Calu3 (cell line): ENCODE measurements at regions of chr11 and their contacts with region 1.

Region 1: GRCh38 chr11:6377902-6378639 is 12.2 kb upstream of the SMPD1 start:
- DNase-seq: no peak
- H3K4me3 Mint-ChIP-seq: no peak overlapping the region
- H3K27ac Mint-ChIP-seq: no peak overlapping the region
- H3K4me1 Mint-ChIP-seq: no peaks in the 10 kb centered on the region
- H3K27me3 Mint-ChIP-seq: peaks cover 28% of the 10 kb centered on the region
- CTCF ChIP-seq: no peak

Region 2: DNA sequence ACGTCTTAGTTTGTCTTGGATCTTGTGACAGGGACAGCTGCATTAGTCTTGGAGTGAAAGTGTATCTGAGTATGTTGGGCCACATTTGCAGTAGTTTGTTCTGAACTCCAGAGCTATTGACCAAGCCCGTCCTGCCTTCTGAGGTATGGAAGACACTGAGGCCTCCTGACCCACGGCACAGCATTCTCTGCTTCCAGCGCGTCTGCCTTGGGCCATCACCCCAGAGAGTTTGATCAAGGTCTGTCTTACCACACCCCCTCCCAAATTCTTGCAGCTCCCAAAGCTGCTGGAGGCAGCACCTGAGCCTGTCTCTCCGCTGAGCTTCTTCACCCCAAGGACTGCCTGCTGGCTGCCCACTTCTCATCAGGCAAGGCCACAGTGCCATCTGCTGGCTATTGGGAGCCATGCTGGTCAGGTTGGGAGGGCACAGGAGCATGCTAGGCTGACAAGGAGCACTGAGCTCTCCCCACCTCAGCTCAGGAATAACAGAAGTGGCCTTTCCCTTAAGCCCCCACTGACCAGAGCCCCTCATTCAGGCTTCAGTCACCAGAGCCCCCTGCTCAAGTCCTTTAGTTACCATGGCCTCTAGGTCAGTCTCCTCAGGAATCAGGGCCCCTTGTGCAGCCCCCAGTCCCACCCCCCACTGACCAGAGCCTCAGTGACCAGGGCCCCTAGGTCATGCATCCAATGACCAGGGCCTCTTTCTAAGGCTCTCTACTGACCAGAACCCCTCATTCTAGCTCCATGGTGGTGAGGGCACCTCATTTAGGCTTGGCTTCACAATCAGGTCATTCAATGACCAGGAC is 15.0 kb before region 1 on chr11:
- CTCF ChIA-PET with region 1: interaction called, 11 read pairs
- intact Hi-C with region 1: no loop called
- DNase-seq: peak; percentile 81
- H3K4me3 Mint-ChIP-seq: no peak overlapping the region
- H3K27ac Mint-ChIP-seq: no peak overlapping the region
- H3K4me1 Mint-ChIP-seq: no peaks in the 10 kb centered on the region
- H3K27me3 Mint-ChIP-seq: no peaks in the 10 kb centered on the region
- CTCF ChIP-seq: peak; percentile 57

Region 3: GRCh38 chr11:6389921-6390724 is 12.1 kb after region 1 on chr11 and contains the start of gene SMPD1:
- CTCF ChIA-PET with region 1: interaction called, 12 read pairs
- intact Hi-C with region 1: no loop called
- DNase-seq: peak; percentile 89
- H3K4me3 Mint-ChIP-seq: peak within 1 kb of the TSS; percentile 89
- H3K27ac Mint-ChIP-seq: peak within 1 kb of the TSS; percentile 84
- H3K4me1 Mint-ChIP-seq: peaks cover 27% of the 10 kb centered on the region
- H3K27me3 Mint-ChIP-seq: no peaks in the 10 kb centered on the region
- CTCF ChIP-seq: no peak
- total RNA-seq, gene SMPD1: 21.2 and 25.6 TPM in 2 replicates

Region 4: GRCh38 chr11:6419009-6419631 is 41.0 kb after region 1 on chr11 and contains the start of gene APBB1:
- CTCF ChIA-PET with region 1: interaction called, 10 read pairs
- intact Hi-C with region 1: no loop called
- DNase-seq: peak; percentile 61
- H3K4me3 Mint-ChIP-seq: no peak within 1 kb of the TSS
- H3K27ac Mint-ChIP-seq: no peak within 1 kb of the TSS
- H3K4me1 Mint-ChIP-seq: no peaks in the 10 kb centered on the region
- H3K27me3 Mint-ChIP-seq: peaks cover 40% of the 10 kb centered on the region
- CTCF ChIP-seq: no peak
- total RNA-seq, gene APBB1: 2.8 and 2.9 TPM in 2 replicates

Region 5: GRCh38 chr11:6443269-6444003 is 65.4 kb after region 1 on chr11:
- CTCF ChIA-PET with region 1: interaction called, 108 read pairs
- intact Hi-C with region 1: loop called (anchors 1 kb)
- DNase-seq: peak; percentile 61
- H3K4me3 Mint-ChIP-seq: no peak overlapping the region
- H3K27ac Mint-ChIP-seq: no peak overlapping the region
- H3K4me1 Mint-ChIP-seq: no peaks in the 10 kb centered on the region
- H3K27me3 Mint-ChIP-seq: no peaks in the 10 kb centered on the region
- CTCF ChIP-seq: peak; percentile 65

Region 6: GRCh38 chr11:6505577-6506240 is 127.6 kb after region 1 on chr11:
- CTCF ChIA-PET with region 1: interaction called, 27 read pairs
- intact Hi-C with region 1: loop called (anchors 1 kb)
- DNase-seq: peak; percentile 24
- H3K4me3 Mint-ChIP-seq: no peak overlapping the region
- H3K27ac Mint-ChIP-seq: no peak overlapping the region
- H3K4me1 Mint-ChIP-seq: no peaks in the 10 kb centered on the region
- H3K27me3 Mint-ChIP-seq: no peaks in the 10 kb centered on the region
- CTCF ChIP-seq: peak; percentile 47

Region 7: GRCh38 chr11:6705905-6706535 is 327.9 kb after region 1 on chr11:
- CTCF ChIA-PET with region 1: no interaction called
- intact Hi-C with region 1: loop called (anchors 1 kb)
- DNase-seq: peak; percentile 50
- H3K4me3 Mint-ChIP-seq: no peak overlapping the region
- H3K27ac Mint-ChIP-seq: no peak overlapping the region
- H3K4me1 Mint-ChIP-seq: no peaks in the 10 kb centered on the region
- H3K27me3 Mint-ChIP-seq: peaks cover 50% of the 10 kb centered on the region
- CTCF ChIP-seq: peak; percentile 65